A673 (cell line): ENCODE measurements at regions of chr2 and their contacts with region 1.

Region 1: GRCh38 chr2:33033606-33034081 is 86.9 kb downstream of the LTBP1 start:
- DNase-seq: peak; percentile 56
- H3K4me3 ChIP-seq: no peak overlapping the region
- H3K27ac ChIP-seq: no peak overlapping the region
- H3K4me1 ChIP-seq: peaks cover 23% of the 10 kb centered on the region
- H3K27me3 ChIP-seq: no peaks in the 10 kb centered on the region
- CTCF ChIP-seq: peak; percentile 57

Region 2: DNA sequence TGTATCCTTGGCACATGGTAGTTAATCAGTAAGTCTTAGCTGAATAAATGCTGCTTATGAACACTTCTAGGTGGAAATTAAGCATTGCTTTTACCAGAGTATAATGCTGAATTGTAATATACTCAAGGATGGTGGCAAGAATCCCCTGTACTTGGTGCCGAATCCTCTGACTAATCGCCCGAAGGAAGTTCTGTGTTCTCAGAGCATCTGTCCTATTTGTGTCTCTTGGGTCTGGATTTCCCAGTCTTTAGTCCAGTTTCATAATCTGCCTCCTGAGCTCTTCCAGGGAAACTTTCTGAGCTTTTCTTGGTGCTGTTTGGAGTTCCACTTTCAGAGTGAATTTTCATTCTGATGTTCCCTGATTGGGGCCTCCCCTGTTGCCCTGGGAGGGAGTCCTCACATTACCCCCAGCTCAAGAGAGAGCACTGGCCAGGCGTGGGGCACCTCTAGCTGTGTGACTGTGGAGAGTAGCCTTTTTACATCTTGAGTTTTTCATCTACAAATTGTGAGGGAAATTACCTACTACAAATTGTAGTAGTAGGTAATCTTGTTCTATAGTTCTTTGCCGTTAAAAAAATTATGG is 58.0 kb after region 1 on chr2:
- CTCF ChIA-PET with region 1: no interaction called
- POLR2A ChIA-PET with region 1: no interaction called
- intact Hi-C with region 1: no loop called
- DNase-seq: no peak
- H3K4me3 ChIP-seq: no peak overlapping the region
- H3K27ac ChIP-seq: no peak overlapping the region
- H3K4me1 ChIP-seq: no peaks in the 10 kb centered on the region
- H3K27me3 ChIP-seq: peaks cover 18% of the 10 kb centered on the region
- CTCF ChIP-seq: no peak

Region 3: DNA sequence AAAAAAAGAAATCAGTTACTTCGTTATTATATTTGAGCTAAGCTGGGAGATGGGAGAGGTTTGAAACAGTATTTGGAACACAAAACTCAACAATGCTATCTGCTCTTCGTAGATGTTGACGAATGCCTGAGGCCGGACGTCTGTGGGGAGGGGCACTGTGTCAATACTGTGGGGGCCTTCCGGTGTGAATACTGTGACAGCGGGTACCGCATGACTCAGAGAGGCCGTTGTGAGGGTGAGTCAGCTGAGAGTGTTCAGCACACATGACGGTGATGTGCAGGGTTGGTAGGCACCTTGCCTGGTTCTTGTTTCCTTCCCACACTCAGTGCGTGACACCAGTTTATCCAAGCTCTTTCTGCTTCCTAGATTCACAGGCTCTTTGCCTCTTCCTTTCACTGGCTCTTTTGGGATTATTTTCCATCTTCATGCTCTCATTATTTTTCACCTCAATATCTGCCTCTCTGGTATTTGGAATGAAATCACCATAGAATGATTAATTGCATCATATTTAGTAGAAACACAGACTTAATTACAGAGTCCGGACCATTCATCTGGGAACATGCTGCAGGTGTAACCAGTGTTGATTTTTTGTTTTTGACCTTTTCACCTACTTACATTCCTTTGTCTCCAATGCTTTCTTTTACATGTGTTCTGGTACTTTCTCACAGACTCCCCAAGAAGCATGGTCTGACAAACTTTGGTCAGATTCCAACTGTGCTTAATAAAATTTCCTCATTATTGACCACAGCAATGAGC is 242.2 kb after region 1 on chr2:
- CTCF ChIA-PET with region 1: no interaction called
- POLR2A ChIA-PET with region 1: no interaction called
- intact Hi-C with region 1: loop called (anchors 5 kb)
- DNase-seq: peak; percentile 37
- H3K4me3 ChIP-seq: no peak overlapping the region
- H3K27ac ChIP-seq: no peak overlapping the region
- H3K4me1 ChIP-seq: no peaks in the 10 kb centered on the region
- H3K27me3 ChIP-seq: no peaks in the 10 kb centered on the region
- CTCF ChIP-seq: no peak

Region 4: DNA sequence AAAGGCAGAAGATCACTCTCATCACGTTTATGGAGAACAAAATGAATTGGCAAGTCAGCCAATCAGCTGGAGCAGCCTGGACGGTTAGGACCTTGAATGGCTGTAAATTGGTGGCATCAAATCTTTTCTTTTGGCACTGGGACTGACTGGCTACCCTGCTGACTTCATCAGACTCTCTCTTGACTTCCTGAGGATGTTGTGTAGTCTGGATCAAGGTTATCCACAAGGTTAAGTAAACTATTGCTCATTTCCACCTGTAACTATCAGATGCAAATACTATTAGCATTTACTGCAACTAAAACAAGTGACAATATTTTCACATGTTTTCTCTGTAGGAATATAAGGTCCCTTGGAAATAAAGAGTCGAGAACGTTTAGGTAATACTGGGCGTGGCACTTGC is 308.5 kb after region 1 on chr2:
- CTCF ChIA-PET with region 1: no interaction called
- POLR2A ChIA-PET with region 1: no interaction called
- intact Hi-C with region 1: no loop called
- DNase-seq: no peak
- H3K4me3 ChIP-seq: no peak overlapping the region
- H3K27ac ChIP-seq: no peak overlapping the region
- H3K4me1 ChIP-seq: no peaks in the 10 kb centered on the region
- H3K27me3 ChIP-seq: no peaks in the 10 kb centered on the region
- CTCF ChIP-seq: no peak

Region 5: DNA sequence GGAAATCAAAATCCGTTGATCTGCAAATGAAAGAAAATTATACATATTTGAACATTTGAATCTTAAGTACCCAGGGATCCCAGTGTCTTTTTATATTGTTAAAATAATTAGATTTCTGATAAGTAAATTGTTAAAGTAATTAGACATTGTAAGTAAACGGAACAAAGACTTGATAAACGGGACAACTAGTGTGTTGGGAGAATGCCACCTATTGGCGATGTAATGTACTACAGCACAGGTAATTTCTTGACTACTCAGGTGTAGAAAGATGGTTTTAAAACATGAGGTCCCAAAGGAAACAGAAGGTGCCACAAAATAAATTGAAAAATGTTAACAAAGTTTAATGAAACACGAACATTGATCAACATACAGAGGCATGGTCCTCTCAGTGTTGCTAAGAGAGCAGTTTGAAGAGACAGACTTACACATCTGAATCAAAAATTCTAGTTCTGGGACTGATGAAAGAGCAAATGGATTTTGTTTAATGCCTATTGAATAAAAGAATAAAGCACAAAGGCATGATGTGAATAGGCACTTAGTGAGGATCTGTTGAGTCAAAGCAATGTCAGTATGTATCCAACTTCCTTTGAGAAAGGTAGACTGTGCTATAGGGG is 339.4 kb after region 1 on chr2:
- CTCF ChIA-PET with region 1: no interaction called
- POLR2A ChIA-PET with region 1: no interaction called
- intact Hi-C with region 1: loop called (anchors 5 kb)
- DNase-seq: peak; percentile 32
- H3K4me3 ChIP-seq: no peak overlapping the region
- H3K27ac ChIP-seq: no peak overlapping the region
- H3K4me1 ChIP-seq: no peaks in the 10 kb centered on the region
- H3K27me3 ChIP-seq: no peaks in the 10 kb centered on the region
- CTCF ChIP-seq: peak; percentile 85

Region 6: DNA sequence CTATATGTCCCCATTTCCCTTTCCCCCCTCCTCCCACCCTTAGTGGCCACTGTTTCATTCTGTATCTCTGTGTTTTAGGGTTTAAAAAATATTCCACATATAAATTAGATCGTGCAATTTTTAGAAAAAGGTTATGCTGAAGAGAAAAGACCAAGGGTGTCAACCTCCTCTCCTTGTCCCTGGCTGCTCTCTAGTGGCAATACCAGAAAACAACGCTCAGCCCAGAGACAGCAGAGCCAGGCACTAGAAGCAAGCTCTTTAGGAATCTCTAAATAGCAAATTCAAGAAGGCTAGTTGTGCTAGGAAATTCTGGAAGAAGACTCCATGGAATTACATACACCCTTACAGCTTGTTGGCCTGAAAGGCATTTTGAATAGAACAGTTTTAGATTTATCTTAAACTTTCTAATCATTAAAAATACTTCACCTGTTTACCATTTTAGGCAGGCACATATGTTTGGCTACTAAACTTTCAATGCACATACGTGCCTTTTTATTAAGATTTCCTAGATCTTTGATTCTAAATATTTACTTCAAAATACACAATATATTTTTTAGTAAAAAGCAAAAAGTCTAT is 407.7 kb after region 1 on chr2:
- CTCF ChIA-PET with region 1: no interaction called
- POLR2A ChIA-PET with region 1: no interaction called
- intact Hi-C with region 1: loop called (anchors 2 kb)
- DNase-seq: peak; percentile 65
- H3K4me3 ChIP-seq: no peak overlapping the region
- H3K27ac ChIP-seq: no peak overlapping the region
- H3K4me1 ChIP-seq: no peaks in the 10 kb centered on the region
- H3K27me3 ChIP-seq: no peaks in the 10 kb centered on the region
- CTCF ChIP-seq: peak; percentile 74